ENCODE measurements at regions of chr9 and their contacts with region 1.

Region 1: GRCh38 chr9:77743386-77743785 is 95.3 kb upstream of the GNA14 start:
- DNase-seq: peak; percentile 75
- ATAC-seq: peak; percentile 82
- H3K4me3 ChIP-seq: no peak overlapping the region
- H3K27ac ChIP-seq: peak overlapping the region; percentile 29; the same call in 1 of the 2 replicates
- H3K4me1 ChIP-seq: peaks cover 8% of the 10 kb centered on the region
- H3K27me3 ChIP-seq: no peaks in the 10 kb centered on the region
- CTCF ChIP-seq: no peak
- POLR2A ChIP-seq: no peak
- RAD21 ChIP-seq: no peak

Region 2: DNA sequence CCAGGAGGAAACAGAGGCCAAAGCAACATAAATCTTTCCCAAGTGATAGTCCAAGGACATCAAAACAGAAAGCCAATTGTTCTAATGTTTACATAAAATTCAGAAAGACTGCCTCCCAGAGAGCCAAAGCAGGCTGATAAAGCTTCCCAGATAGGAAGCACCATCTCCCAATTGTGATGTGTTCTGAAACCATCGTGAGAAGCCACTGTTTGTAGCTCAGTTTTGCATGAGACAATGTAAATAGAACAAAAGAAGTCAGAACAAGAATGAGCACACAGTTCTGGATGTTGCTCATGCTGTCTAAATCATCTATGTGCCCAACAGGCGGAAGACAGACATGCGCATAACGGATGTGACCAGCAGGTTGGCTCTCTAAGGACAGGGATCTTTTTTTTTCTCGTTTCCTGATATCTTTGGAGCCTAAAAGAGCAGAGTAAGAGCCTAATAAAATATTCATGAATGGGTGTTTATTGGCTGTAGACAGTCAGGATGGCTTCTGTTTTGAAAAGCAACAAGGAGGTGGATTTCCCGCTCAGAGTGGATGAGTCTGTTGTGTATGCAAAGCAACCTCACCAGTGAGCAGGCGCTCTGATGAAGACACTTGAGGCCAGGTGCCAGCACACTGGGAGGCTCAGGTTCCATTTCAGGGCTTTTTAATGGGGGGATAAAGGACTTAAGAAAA is 208.9 kb before region 1 on chr9:
- CTCF ChIA-PET with region 1: no interaction called
- POLR2A ChIA-PET with region 1: no interaction called
- dilution Hi-C with region 1: no loop called
- in situ Hi-C with region 1: no loop called
- intact Hi-C with region 1: no loop called
- DNase-seq: no peak
- ATAC-seq: no peak
- H3K4me3 ChIP-seq: no peak overlapping the region
- H3K27ac ChIP-seq: no peak overlapping the region
- H3K4me1 ChIP-seq: no peaks in the 10 kb centered on the region
- H3K27me3 ChIP-seq: no peaks in the 10 kb centered on the region
- CTCF ChIP-seq: no peak
- POLR2A ChIP-seq: no peak
- RAD21 ChIP-seq: no peak

Region 3: GRCh38 chr9:77588271-77588937 is 155.0 kb before region 1 on chr9:
- CTCF ChIA-PET with region 1: no interaction called
- POLR2A ChIA-PET with region 1: no interaction called
- dilution Hi-C with region 1: no loop called
- in situ Hi-C with region 1: no loop called
- intact Hi-C with region 1: loop called (anchors 10 kb)
- DNase-seq: peak; percentile 89
- ATAC-seq: peak; percentile 93
- H3K4me3 ChIP-seq: no peak overlapping the region
- H3K27ac ChIP-seq: no peak overlapping the region
- H3K4me1 ChIP-seq: no peaks in the 10 kb centered on the region
- H3K27me3 ChIP-seq: peaks cover 2% of the 10 kb centered on the region; the same call in 1 of the 2 replicates
- CTCF ChIP-seq: no peak
- POLR2A ChIP-seq: no peak
- RAD21 ChIP-seq: no peak

Region 4: DNA sequence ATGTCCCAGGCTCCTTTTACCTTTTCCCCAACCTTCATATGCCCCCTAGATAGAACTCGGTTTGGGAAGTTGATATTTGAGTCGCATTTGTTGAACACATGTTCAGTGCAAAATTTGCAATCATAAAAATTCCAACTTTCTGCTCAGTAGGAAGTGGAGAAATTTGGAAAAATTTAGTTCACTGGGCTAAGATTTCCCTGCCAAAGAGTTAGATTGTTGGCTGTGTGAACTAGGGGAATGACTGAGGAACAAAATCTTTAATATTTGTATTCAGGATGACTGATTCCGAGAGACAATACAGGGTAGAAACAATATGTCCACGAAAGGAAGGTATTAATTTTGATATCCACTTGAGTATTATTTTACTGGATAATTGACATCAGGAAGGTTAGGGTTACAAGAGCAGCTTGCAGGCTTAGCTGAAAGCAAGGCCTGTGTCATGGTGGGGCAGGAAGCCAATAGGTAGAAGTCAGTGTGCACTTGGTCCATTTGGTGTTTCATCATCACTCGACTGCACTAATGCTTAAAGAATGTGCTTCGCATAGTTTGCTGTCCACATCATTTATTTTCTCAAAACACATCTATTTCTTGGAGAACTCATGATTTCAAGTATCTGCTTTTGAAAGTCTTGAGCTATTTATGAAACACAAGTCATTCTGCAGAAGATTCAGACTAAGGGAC is 35.9 kb before region 1 on chr9:
- CTCF ChIA-PET with region 1: no interaction called
- POLR2A ChIA-PET with region 1: no interaction called
- dilution Hi-C with region 1: no loop called
- in situ Hi-C with region 1: no loop called
- intact Hi-C with region 1: loop called (anchors 1 kb)
- DNase-seq: peak; percentile 99
- ATAC-seq: peak; percentile 86
- H3K4me3 ChIP-seq: no peak overlapping the region
- H3K27ac ChIP-seq: peak overlapping the region; percentile 62; the same call in 1 of the 2 replicates
- H3K4me1 ChIP-seq: peaks cover 8% of the 10 kb centered on the region
- H3K27me3 ChIP-seq: no peaks in the 10 kb centered on the region
- CTCF ChIP-seq: no peak
- POLR2A ChIP-seq: no peak
- RAD21 ChIP-seq: no peak

Measured in IMR-90 (cell line).